H1 (cell line): ENCODE measurements at regions of chr11 and their contacts with region 1.

Region 1: GRCh38 chr11:67317205-67317887 is 14.0 kb downstream of the SSH3 start:
- DNase-seq: peak; percentile 90 to 99
- H3K4me3 ChIP-seq: peak overlapping the region; percentile 41 to 89 (median 68)
- H3K27ac ChIP-seq: no peak overlapping the region
- H3K4me1 ChIP-seq: peaks cover 0 to 3% (median 0%) of the 10 kb centered on the region in 4 experiments; a peak in 2 of 7 replicates
- H3K27me3 ChIP-seq: peaks cover 5 to 16% (median 11%) of the 10 kb centered on the region in 4 experiments; a peak in 6 of 7 replicates
- CTCF ChIP-seq: peak; percentile 89 to 93 (median 92)
- EP300 ChIP-seq: no peak
- POLR2A ChIP-seq: no peak; a peak in 2 of 3 replicates
- RAD21 ChIP-seq: peak; percentile 93 to 95

Region 2: DNA sequence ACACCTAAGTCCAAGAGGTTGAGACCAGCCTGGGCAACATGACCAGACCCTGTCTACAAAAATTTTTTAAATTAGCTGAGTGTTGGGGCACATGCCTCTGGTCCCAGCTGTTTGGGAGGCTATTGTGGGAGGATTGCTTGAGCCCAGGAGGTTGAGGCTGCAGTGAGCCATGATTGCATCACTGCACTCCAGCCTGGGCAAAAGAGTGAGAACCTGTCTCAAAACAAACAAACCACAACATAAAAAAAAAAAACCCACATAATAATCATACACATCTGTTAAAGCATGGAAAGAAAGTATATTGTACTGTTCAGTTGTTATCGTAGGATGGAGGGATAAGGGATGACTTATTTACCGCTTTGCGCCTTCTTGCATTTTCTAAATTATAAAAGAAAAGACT is 86.9 kb before region 1 on chr11:
- CTCF ChIA-PET with region 1: interaction called, 10 read pairs
- POLR2A ChIA-PET with region 1: no interaction called
- DNase-seq: no peak
- H3K4me3 ChIP-seq: no peak overlapping the region
- H3K27ac ChIP-seq: no peak overlapping the region
- H3K4me1 ChIP-seq: no peaks in the 10 kb centered on the region
- H3K27me3 ChIP-seq: no peaks in the 10 kb centered on the region
- CTCF ChIP-seq: no peak
- EP300 ChIP-seq: no peak
- POLR2A ChIP-seq: no peak
- RAD21 ChIP-seq: no peak

Region 3: GRCh38 chr11:67303132-67303834 is 14.1 kb before region 1 on chr11 and contains the start of gene SSH3:
- CTCF ChIA-PET with region 1: interaction called, 14 read pairs
- POLR2A ChIA-PET with region 1: interaction called, 4 read pairs
- DNase-seq: peak in 1 of 2 experiments; percentile 46
- H3K4me3 ChIP-seq: peak within 1 kb of the TSS; percentile 67 to 94 (median 74)
- H3K27ac ChIP-seq: no peak within 1 kb of the TSS
- H3K4me1 ChIP-seq: peaks cover 0 to 20% (median 16%) of the 10 kb centered on the region in 4 experiments; a peak in 5 of 7 replicates
- H3K27me3 ChIP-seq: peaks cover 0 to 11% (median 7%) of the 10 kb centered on the region in 4 experiments; a peak in 5 of 7 replicates
- CTCF ChIP-seq: no peak
- EP300 ChIP-seq: no peak
- POLR2A ChIP-seq: no peak; a peak in 1 of 3 replicates
- RAD21 ChIP-seq: no peak
- total RNA-seq, gene SSH3: 19.8 and 23.6 TPM in 2 replicates

Region 4: GRCh38 chr11:67332081-67332691 is 14.8 kb after region 1 on chr11:
- CTCF ChIA-PET with region 1: interaction called, 3 read pairs
- POLR2A ChIA-PET with region 1: interaction called, 10 read pairs
- DNase-seq: no peak
- H3K4me3 ChIP-seq: no peak overlapping the region
- H3K27ac ChIP-seq: no peak overlapping the region
- H3K4me1 ChIP-seq: no peaks in the 10 kb centered on the region
- H3K27me3 ChIP-seq: no peaks in the 10 kb centered on the region
- CTCF ChIP-seq: no peak
- EP300 ChIP-seq: no peak
- POLR2A ChIP-seq: no peak
- RAD21 ChIP-seq: no peak

Region 5: GRCh38 chr11:67353317-67354074 is 36.1 kb after region 1 on chr11 and contains the start of gene POLD4:
- CTCF ChIA-PET with region 1: interaction called, 62 read pairs
- POLR2A ChIA-PET with region 1: interaction called, 4 read pairs
- DNase-seq: peak; percentile 79 to 99
- H3K4me3 ChIP-seq: peak within 1 kb of the TSS; percentile 57 to 78 (median 73)
- H3K27ac ChIP-seq: peak within 1 kb of the TSS; percentile 72; the same call in 1 of the 2 replicates
- H3K4me1 ChIP-seq: peaks cover 0 to 18% (median 15%) of the 10 kb centered on the region in 4 experiments; a peak in 6 of 7 replicates
- H3K27me3 ChIP-seq: no peaks in the 10 kb centered on the region; a peak in 1 of 7 replicates
- CTCF ChIP-seq: no peak
- EP300 ChIP-seq: no peak
- POLR2A ChIP-seq: peak in 1 of 2 experiments; percentile 64; a peak in 2 of 3 replicates
- RAD21 ChIP-seq: no peak
- total RNA-seq, gene POLD4: 18.5 and 21.2 TPM in 2 replicates

Region 6: GRCh38 chr11:67382276-67383136 is 65.2 kb after region 1 on chr11:
- CTCF ChIA-PET with region 1: interaction called, 31 read pairs
- POLR2A ChIA-PET with region 1: interaction called, 3 read pairs
- DNase-seq: peak in 1 of 2 experiments; percentile 94
- H3K4me3 ChIP-seq: no peak overlapping the region
- H3K27ac ChIP-seq: no peak overlapping the region
- H3K4me1 ChIP-seq: peaks cover 0 to 11% (median 5%) of the 10 kb centered on the region in 4 experiments; a peak in 5 of 7 replicates
- H3K27me3 ChIP-seq: peaks cover 0 to 16% (median 10%) of the 10 kb centered on the region in 4 experiments; a peak in 5 of 7 replicates
- CTCF ChIP-seq: peak; percentile 95 to 99 (median 98)
- EP300 ChIP-seq: no peak
- POLR2A ChIP-seq: no peak
- RAD21 ChIP-seq: peak; percentile 99 to 100

Region 7: DNA sequence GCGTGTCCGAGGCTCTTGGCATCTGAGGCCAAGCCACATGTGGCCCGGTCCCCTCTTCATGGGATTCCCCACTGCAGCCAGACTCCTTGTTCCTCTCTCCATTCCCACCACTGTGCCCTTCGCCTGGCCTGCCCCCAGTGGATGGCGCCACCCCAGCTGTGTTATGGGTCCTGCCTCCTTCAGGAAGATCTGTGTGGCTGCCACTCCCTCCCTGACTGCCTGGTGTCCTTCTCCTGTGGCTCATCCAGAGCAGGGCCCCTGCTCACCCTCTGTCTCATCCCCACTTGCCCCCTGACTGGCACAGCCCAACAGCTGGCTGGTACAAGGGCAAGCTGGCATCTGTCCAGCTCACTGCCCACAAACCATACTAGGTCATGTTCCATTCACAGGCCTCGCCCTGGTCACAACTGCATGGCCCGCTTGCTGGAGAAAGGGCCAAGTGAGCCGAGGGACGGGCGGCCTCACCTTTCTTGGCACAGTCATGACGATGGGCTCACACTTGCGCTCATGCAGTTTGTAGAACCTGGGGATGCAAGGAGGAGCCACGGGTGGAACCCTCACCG is 122.1 kb after region 1 on chr11:
- CTCF ChIA-PET with region 1: no interaction called
- POLR2A ChIA-PET with region 1: no interaction called
- DNase-seq: no peak
- H3K4me3 ChIP-seq: no peak overlapping the region
- H3K27ac ChIP-seq: no peak overlapping the region
- H3K4me1 ChIP-seq: peaks cover 0 to 24% (median 16%) of the 10 kb centered on the region in 4 experiments; a peak in 6 of 7 replicates
- H3K27me3 ChIP-seq: no peaks in the 10 kb centered on the region
- CTCF ChIP-seq: peak in 2 of 3 experiments; percentile 53 to 60; a peak in 3 of 4 replicates
- EP300 ChIP-seq: no peak
- POLR2A ChIP-seq: no peak
- RAD21 ChIP-seq: peak; percentile 31 to 46; a peak in 3 of 4 replicates